K562 (cell line): ENCODE measurements at regions of chr11 and their contacts with region 1.

Region 1: DNA sequence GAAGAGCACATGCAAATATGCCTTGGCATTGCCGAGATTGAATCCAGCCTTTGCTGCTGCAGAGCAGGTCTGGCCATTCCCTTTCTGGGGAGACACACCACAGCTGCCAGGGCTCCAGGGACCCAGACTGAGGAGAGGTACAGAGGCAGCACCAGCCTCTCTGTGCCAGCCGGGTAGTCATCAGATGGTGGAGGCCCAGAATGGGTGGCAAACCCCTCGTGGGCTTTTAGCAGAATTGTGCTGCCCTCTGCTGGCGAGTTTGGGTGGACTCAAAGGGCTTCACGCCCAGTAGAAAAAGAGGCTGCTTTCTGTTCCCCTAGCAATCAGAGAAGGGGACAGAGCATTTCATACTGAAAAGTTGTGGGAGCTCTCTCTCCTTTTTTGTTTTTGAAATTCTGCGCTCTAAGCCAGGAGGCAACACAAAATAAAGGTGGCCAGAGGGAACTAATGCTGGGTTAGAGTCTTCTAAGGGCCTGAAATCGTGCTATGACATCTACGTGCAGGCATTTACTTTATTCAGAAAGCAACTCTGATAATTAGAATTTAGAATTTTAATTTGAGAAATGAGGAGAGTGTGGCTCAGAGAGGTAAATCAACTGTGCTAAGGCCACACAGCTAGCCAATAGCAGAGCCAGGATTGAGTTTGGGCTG is 158.8 kb upstream of the NAV2 start:
- DNase-seq: peak; percentile 55 to 74 (median 64)
- ATAC-seq: peak; percentile 90
- H3K4me3 ChIP-seq: no peak overlapping the region
- H3K27ac ChIP-seq: no peak overlapping the region
- H3K4me1 ChIP-seq: no peaks in the 10 kb centered on the region
- H3K27me3 ChIP-seq: peaks cover 0 to 8% of the 10 kb centered on the region in 2 experiments; a peak in 2 of 5 replicates
- CTCF ChIP-seq: peak; percentile 84 to 89 (median 85)
- EP300 ChIP-seq: no peak
- POLR2A ChIP-seq: no peak
- RAD21 ChIP-seq: peak; percentile 91 to 94

Region 2: DNA sequence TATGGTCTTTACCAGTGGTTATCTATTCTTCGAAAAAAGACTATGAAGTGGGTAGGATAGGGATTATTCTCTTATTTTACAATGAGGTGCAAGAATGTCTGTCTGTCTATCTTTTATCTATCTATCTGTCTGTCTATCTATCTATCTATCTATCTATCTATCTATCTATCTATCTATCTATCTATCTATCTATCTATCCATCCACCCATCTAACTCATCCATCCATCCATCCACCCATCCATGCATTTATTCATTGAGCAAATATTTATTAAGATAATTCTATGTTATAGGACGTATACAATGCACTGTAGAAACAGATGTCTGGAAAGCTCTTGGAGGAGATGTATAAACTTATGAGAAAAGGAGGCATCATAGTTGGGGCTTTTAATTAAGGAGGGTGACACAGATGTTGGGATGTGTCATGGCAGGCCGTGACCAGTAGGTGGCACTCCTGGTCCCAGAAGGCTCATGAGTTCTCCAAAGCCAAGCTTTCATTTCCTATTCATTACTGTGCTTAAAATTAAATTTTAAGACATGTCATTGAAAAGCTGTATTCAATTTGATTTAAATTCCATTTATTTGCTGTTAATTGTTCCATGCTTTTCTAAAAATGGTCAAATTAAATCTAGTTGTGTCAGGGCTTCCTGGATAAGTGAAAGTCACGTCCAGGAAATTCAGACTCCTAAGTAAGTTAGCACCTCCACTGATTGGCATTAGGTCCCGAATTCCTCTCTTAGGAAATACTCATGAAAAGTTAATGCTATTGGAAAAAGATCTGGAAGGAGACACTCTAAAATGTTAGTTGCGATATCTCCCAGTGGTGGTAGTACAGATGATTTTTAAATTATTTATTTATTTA is 294.1 kb before region 1 on chr11:
- CTCF ChIA-PET with region 1: interaction called, 9 read pairs
- POLR2A ChIA-PET with region 1: no interaction called
- in situ Hi-C with region 1: no loop called
- intact Hi-C with region 1: loop called (anchors 2 kb)
- DNase-seq: peak; percentile 59 to 73 (median 68)
- ATAC-seq: peak; percentile 90
- H3K4me3 ChIP-seq: no peak overlapping the region
- H3K27ac ChIP-seq: no peak overlapping the region
- H3K4me1 ChIP-seq: no peaks in the 10 kb centered on the region
- H3K27me3 ChIP-seq: peaks cover 8 to 12% of the 10 kb centered on the region in 2 experiments; a peak in 4 of 5 replicates
- CTCF ChIP-seq: peak; percentile 76 to 88 (median 84)
- EP300 ChIP-seq: no peak
- POLR2A ChIP-seq: no peak
- RAD21 ChIP-seq: peak; percentile 59 to 74

Region 3: GRCh38 chr11:19311308-19312030 is 242.3 kb before region 1 on chr11:
- CTCF ChIA-PET with region 1: interaction called, 7 read pairs
- POLR2A ChIA-PET with region 1: interaction called, 3 read pairs
- in situ Hi-C with region 1: loop called (anchors 10 kb)
- intact Hi-C with region 1: loop called (anchors 1 kb)
- DNase-seq: peak; percentile 62 to 68 (median 64)
- ATAC-seq: peak; percentile 98
- H3K4me3 ChIP-seq: no peak overlapping the region
- H3K27ac ChIP-seq: no peak overlapping the region
- H3K4me1 ChIP-seq: no peaks in the 10 kb centered on the region
- H3K27me3 ChIP-seq: peaks cover 9 to 35% of the 10 kb centered on the region in 2 experiments; a peak in 4 of 5 replicates
- CTCF ChIP-seq: peak; percentile 73 to 80 (median 74)
- EP300 ChIP-seq: no peak
- POLR2A ChIP-seq: no peak
- RAD21 ChIP-seq: peak; percentile 41 to 69

Region 4: DNA sequence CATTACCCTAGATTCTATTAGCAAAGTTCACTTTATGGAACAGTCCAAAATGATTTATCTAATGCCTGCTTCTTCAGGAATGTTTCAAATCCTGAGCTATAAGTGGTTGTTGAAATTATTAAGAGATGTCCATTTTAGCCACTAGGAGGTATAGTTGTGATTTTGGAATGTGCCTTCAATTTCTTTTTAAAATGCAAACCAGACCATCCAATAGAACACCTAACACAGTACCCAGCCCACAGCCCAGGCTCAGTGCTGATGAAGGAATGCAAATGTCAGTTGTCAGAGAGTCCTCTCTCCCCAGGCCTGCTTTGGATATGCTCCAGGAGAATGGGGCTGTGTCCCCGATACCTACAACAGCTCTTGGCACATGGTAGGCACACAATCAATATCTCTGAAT is 227.3 kb before region 1 on chr11:
- CTCF ChIA-PET with region 1: interaction called, 8 read pairs
- POLR2A ChIA-PET with region 1: no interaction called
- in situ Hi-C with region 1: no loop called
- intact Hi-C with region 1: loop called (anchors 5 kb)
- DNase-seq: no peak
- ATAC-seq: no peak
- H3K4me3 ChIP-seq: no peak overlapping the region
- H3K27ac ChIP-seq: no peak overlapping the region
- H3K4me1 ChIP-seq: no peaks in the 10 kb centered on the region
- H3K27me3 ChIP-seq: peaks cover 0 to 6% of the 10 kb centered on the region in 2 experiments; a peak in 1 of 5 replicates
- CTCF ChIP-seq: peak in 1 of 3 experiments; percentile 38; a peak in 2 of 6 replicates
- EP300 ChIP-seq: no peak
- POLR2A ChIP-seq: no peak
- RAD21 ChIP-seq: peak in 1 of 2 experiments; percentile 32; a peak in 2 of 4 replicates

Region 5: GRCh38 chr11:19642185-19643158 is 88.7 kb after region 1 on chr11:
- CTCF ChIA-PET with region 1: no interaction called
- POLR2A ChIA-PET with region 1: no interaction called
- in situ Hi-C with region 1: no loop called
- intact Hi-C with region 1: no loop called
- DNase-seq: no peak
- ATAC-seq: no peak
- H3K4me3 ChIP-seq: no peak overlapping the region
- H3K27ac ChIP-seq: no peak overlapping the region
- H3K4me1 ChIP-seq: no peaks in the 10 kb centered on the region
- H3K27me3 ChIP-seq: no peaks in the 10 kb centered on the region; a peak in 1 of 5 replicates
- CTCF ChIP-seq: no peak
- EP300 ChIP-seq: no peak
- POLR2A ChIP-seq: no peak
- RAD21 ChIP-seq: no peak

Region 6: GRCh38 chr11:19697721-19698121 is 143.9 kb after region 1 on chr11:
- CTCF ChIA-PET with region 1: no interaction called
- POLR2A ChIA-PET with region 1: no interaction called
- in situ Hi-C with region 1: no loop called
- intact Hi-C with region 1: no loop called
- DNase-seq: no peak
- ATAC-seq: no peak
- H3K4me3 ChIP-seq: no peak overlapping the region
- H3K27ac ChIP-seq: no peak overlapping the region
- H3K4me1 ChIP-seq: no peaks in the 10 kb centered on the region
- H3K27me3 ChIP-seq: peaks cover 0 to 8% of the 10 kb centered on the region in 2 experiments; a peak in 2 of 5 replicates
- CTCF ChIP-seq: no peak
- EP300 ChIP-seq: no peak
- POLR2A ChIP-seq: no peak
- RAD21 ChIP-seq: no peak

Region 7: GRCh38 chr11:19742588-19743292 is 188.9 kb after region 1 on chr11:
- CTCF ChIA-PET with region 1: interaction called, 14 read pairs
- POLR2A ChIA-PET with region 1: no interaction called
- in situ Hi-C with region 1: no loop called
- intact Hi-C with region 1: no loop called
- DNase-seq: peak; percentile 41 to 71 (median 48)
- ATAC-seq: peak; percentile 94
- H3K4me3 ChIP-seq: no peak overlapping the region
- H3K27ac ChIP-seq: no peak overlapping the region
- H3K4me1 ChIP-seq: no peaks in the 10 kb centered on the region
- H3K27me3 ChIP-seq: peaks cover 0 to 14% of the 10 kb centered on the region in 2 experiments; a peak in 1 of 5 replicates
- CTCF ChIP-seq: peak; percentile 78 to 82 (median 81)
- EP300 ChIP-seq: no peak
- POLR2A ChIP-seq: no peak
- RAD21 ChIP-seq: peak; percentile 94 to 95